ENCODE measurements at regions of chr5 and their contacts with region 1.

Region 1: GRCh38 chr5:7897014-7897632 is 28.2 kb downstream of the MTRR start:
- DNase-seq: peak in 1 of 5 donors; percentile 35
- H3K4me3 ChIP-seq: no peak overlapping the region
- H3K27ac ChIP-seq: no peak overlapping the region
- H3K4me1 ChIP-seq: no peaks in the 10 kb centered on the region
- H3K27me3 ChIP-seq: no peaks in the 10 kb centered on the region
- CTCF ChIP-seq: no peak
- EP300 ChIP-seq: no peak
- POLR2A ChIP-seq: no peak

Region 2: GRCh38 chr5:9557696-9558095 is 1660.6 kb after region 1 on chr5:
- intact Hi-C with region 1: loop called in 1 of 4 experiments (anchors 10 kb)
- DNase-seq: no peak
- H3K4me3 ChIP-seq: no peak overlapping the region
- H3K27ac ChIP-seq: no peak overlapping the region
- H3K4me1 ChIP-seq: no peaks in the 10 kb centered on the region
- H3K27me3 ChIP-seq: no peaks in the 10 kb centered on the region
- CTCF ChIP-seq: no peak
- EP300 ChIP-seq: no peak
- POLR2A ChIP-seq: no peak

Measured in ovary (tissue), 10 donors.